Ascending aorta (tissue), 2 donors: ENCODE measurements at regions of chr2 and their contacts with region 1.

Region 1: DNA sequence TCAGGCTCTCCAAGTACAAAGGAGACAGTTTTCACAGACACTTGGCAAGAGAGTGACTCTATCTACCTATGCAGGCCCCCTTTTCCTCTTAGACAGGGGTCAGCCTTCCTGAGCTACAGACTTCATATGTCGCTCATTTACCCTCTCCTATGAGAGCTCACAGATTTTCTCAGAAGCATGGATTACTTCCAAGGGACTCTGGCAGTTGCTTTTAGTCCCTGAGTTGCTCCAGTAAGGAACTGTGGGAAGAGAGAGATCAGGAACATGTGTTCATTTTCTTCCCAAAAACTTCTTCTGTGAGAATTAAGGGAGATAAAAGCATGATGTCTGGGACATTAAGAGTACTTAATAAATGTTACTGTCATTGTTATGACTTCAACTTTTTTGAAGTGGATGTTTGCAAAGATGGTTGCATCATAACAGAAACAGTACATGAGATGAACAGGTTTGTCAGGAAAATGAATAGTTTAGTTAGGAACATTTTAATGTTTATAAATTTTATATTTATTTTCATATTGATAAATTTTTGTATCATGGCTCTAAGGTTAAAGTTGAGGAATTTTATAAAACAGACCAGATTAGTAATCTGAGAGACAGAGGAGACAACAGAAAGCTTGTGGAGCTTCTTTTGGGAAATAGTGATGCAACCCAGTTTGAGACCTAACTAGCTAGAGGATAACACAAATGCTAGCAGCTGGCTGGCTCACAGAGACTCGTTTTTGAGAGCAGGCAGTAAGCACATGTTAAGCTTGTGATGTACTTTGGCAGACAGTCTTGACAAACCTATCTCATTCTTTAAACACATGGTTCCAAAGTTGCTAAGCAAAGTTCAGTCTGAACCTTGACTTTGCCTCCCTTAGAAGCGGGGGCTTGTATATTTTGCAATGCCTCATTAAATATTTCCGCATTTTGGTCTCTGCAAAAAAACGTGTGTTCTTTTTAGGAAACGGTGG is 21.7 kb upstream of the UGP2 start:
- DNase-seq: no peak
- H3K4me3 ChIP-seq: no peak overlapping the region
- H3K27ac ChIP-seq: peak overlapping the region; percentile 43 to 60
- H3K4me1 ChIP-seq: peaks cover 5 to 18% of the 10 kb centered on the region in 2 donors
- H3K27me3 ChIP-seq: no peaks in the 10 kb centered on the region
- CTCF ChIP-seq: no peak

Region 2: DNA sequence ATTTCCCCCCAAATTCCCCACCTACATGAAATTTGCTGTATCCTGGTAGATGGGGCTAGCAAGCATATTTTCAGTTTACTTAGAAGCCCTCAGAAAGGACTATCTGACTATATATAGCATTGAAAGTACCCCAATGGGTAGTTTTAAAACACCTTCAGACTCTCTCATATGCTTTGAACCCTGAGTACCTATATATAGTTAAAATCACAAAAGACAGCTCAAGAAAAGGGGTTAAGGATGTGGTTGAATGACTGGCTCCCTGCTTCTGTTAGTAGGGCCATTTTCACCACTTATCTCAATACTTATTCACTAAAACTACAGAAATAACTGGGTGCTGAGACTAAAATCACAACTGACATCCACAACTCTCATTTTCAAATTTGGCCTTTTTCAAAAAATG is 250.3 kb before region 1 on chr2:
- intact Hi-C with region 1: no loop called
- DNase-seq: no peak
- H3K4me3 ChIP-seq: no peak overlapping the region
- H3K27ac ChIP-seq: no peak overlapping the region
- H3K4me1 ChIP-seq: no peaks in the 10 kb centered on the region
- H3K27me3 ChIP-seq: no peaks in the 10 kb centered on the region
- CTCF ChIP-seq: no peak

Region 3: DNA sequence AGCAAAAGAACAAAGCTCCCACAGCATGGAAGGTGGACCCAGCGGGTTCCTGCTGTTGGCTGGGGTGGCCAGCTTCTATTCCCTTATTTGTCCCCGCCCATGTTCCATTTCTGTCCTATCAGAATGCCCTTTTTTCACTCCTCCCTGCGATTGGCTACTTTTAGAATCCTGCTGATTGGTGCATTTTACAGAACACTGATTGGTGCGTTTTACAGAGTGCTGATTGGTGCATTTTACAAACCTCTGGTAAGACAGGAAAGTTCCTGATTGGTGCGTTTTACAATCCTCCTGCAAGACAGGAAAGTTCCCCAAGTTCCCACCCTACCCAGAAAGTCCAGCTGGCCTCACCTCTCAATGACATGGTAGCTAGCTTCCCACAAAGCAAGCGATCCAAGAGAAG is 18.6 kb before region 1 on chr2:
- intact Hi-C with region 1: loop called (anchors 2 kb)
- DNase-seq: no peak
- H3K4me3 ChIP-seq: no peak overlapping the region
- H3K27ac ChIP-seq: no peak overlapping the region
- H3K4me1 ChIP-seq: no peaks in the 10 kb centered on the region
- H3K27me3 ChIP-seq: no peaks in the 10 kb centered on the region
- CTCF ChIP-seq: no peak

Region 4: GRCh38 chr2:64359892-64360657 is 540.0 kb after region 1 on chr2:
- intact Hi-C with region 1: no loop called
- DNase-seq: peak; percentile 90 to 97
- H3K4me3 ChIP-seq: no peak overlapping the region
- H3K27ac ChIP-seq: peak overlapping the region; percentile 72 to 78
- H3K4me1 ChIP-seq: peaks cover 0 to 10% of the 10 kb centered on the region in 2 donors
- H3K27me3 ChIP-seq: no peaks in the 10 kb centered on the region
- CTCF ChIP-seq: no peak

Region 5: GRCh38 chr2:65831509-65831908 is 2011.5 kb after region 1 on chr2:
- intact Hi-C with region 1: no loop called
- DNase-seq: no peak
- H3K4me3 ChIP-seq: no peak overlapping the region
- H3K27ac ChIP-seq: no peak overlapping the region
- H3K4me1 ChIP-seq: no peaks in the 10 kb centered on the region
- H3K27me3 ChIP-seq: no peaks in the 10 kb centered on the region
- CTCF ChIP-seq: no peak